ENCODE measurements at regions of chr11 and their contacts with region 1.

Region 1: GRCh38 chr11:77994412-77995362 is at the start of gene INTS4:
- DNase-seq: peak; percentile 99
- H3K4me3 Mint-ChIP-seq: peak within 1 kb of the TSS; percentile 83
- H3K27ac Mint-ChIP-seq: peak within 1 kb of the TSS; percentile 91
- H3K4me1 Mint-ChIP-seq: peaks cover 17% of the 10 kb centered on the region
- H3K27me3 Mint-ChIP-seq: no peaks in the 10 kb centered on the region
- total RNA-seq, gene INTS4: 45.5 to 46.0 TPM

Region 2: DNA sequence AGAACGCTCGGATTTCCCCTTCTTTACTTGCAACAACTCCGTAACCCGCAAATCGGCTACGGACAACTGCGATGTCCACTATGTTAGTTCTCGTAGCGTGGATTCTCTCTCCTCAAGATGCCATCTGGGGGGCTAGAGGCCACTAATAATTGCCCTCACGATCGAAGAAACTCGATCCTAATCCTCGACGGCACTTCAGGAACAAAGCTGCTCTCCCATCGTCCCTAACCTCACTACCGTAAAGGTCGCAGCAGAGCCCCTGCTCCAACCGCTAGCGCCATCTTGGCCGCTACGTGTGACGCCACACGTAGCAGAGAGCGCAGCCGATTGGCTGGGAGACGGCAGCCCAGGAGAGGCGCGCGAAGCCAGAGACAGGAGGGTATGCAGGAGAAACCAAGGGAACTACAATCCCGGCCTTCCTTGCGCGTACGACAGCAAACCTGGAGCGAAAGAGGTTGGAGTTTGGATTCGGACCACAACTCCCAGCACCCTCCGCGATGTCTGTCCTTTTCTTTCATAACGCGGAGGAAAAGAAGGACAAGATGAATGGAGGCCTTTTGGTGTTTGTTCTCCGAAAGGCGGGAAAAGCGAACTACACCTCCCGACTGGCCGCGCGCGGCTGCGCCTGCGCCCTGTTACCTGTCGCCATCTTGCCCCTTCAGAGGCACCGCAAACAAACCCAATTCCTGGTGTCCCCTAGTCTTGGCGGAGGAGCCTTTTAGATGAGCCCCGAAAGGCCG is 1550.1 kb before region 1 on chr11 and contains the start of gene EMSY:
- CTCF ChIA-PET with region 1: no interaction called
- intact Hi-C with region 1: loop called (anchors 10 kb)
- DNase-seq: peak; percentile 95
- H3K4me3 Mint-ChIP-seq: peak within 1 kb of the TSS; percentile 95
- H3K27ac Mint-ChIP-seq: peak within 1 kb of the TSS; percentile 96
- H3K4me1 Mint-ChIP-seq: peaks cover 32% of the 10 kb centered on the region
- H3K27me3 Mint-ChIP-seq: no peaks in the 10 kb centered on the region
- total RNA-seq, gene EMSY: 23.2 to 26.7 TPM

Region 3: GRCh38 chr11:77637345-77638165 is 357.1 kb before region 1 on chr11 and contains the start of gene CLNS1A:
- CTCF ChIA-PET with region 1: no interaction called
- intact Hi-C with region 1: loop called (anchors 1 kb)
- DNase-seq: peak; percentile 90
- H3K4me3 Mint-ChIP-seq: peak within 1 kb of the TSS; percentile 89
- H3K27ac Mint-ChIP-seq: peak within 1 kb of the TSS; percentile 92
- H3K4me1 Mint-ChIP-seq: peaks cover 35% of the 10 kb centered on the region
- H3K27me3 Mint-ChIP-seq: no peaks in the 10 kb centered on the region
- total RNA-seq, gene CLNS1A: 190 to 191 TPM

Region 4: GRCh38 chr11:78045851-78046485 is 51.3 kb after region 1 on chr11:
- CTCF ChIA-PET with region 1: interaction called, 11 read pairs
- intact Hi-C with region 1: loop called (anchors 2 kb)
- DNase-seq: peak; percentile 78
- H3K4me3 Mint-ChIP-seq: peak overlapping the region; percentile 39
- H3K27ac Mint-ChIP-seq: no peak overlapping the region
- H3K4me1 Mint-ChIP-seq: peaks cover 9% of the 10 kb centered on the region
- H3K27me3 Mint-ChIP-seq: no peaks in the 10 kb centered on the region

Region 5: GRCh38 chr11:78139422-78140391 is 145.0 kb after region 1 on chr11 and contains the start of gene ALG8:
- CTCF ChIA-PET with region 1: no interaction called
- intact Hi-C with region 1: loop called (anchors 1 kb)
- DNase-seq: peak; percentile 97
- H3K4me3 Mint-ChIP-seq: peak within 1 kb of the TSS; percentile 85
- H3K27ac Mint-ChIP-seq: peak within 1 kb of the TSS; percentile 90
- H3K4me1 Mint-ChIP-seq: peaks cover 33% of the 10 kb centered on the region
- H3K27me3 Mint-ChIP-seq: no peaks in the 10 kb centered on the region
- total RNA-seq, gene ALG8: 35.1 to 35.9 TPM

Region 6: GRCh38 chr11:78202733-78203167 is 208.1 kb after region 1 on chr11:
- CTCF ChIA-PET with region 1: no interaction called
- intact Hi-C with region 1: loop called (anchors 2 kb)
- DNase-seq: peak; percentile 73
- H3K4me3 Mint-ChIP-seq: peak overlapping the region; percentile 59
- H3K27ac Mint-ChIP-seq: peak overlapping the region; percentile 95
- H3K4me1 Mint-ChIP-seq: peaks cover 43% of the 10 kb centered on the region
- H3K27me3 Mint-ChIP-seq: no peaks in the 10 kb centered on the region

Region 7: DNA sequence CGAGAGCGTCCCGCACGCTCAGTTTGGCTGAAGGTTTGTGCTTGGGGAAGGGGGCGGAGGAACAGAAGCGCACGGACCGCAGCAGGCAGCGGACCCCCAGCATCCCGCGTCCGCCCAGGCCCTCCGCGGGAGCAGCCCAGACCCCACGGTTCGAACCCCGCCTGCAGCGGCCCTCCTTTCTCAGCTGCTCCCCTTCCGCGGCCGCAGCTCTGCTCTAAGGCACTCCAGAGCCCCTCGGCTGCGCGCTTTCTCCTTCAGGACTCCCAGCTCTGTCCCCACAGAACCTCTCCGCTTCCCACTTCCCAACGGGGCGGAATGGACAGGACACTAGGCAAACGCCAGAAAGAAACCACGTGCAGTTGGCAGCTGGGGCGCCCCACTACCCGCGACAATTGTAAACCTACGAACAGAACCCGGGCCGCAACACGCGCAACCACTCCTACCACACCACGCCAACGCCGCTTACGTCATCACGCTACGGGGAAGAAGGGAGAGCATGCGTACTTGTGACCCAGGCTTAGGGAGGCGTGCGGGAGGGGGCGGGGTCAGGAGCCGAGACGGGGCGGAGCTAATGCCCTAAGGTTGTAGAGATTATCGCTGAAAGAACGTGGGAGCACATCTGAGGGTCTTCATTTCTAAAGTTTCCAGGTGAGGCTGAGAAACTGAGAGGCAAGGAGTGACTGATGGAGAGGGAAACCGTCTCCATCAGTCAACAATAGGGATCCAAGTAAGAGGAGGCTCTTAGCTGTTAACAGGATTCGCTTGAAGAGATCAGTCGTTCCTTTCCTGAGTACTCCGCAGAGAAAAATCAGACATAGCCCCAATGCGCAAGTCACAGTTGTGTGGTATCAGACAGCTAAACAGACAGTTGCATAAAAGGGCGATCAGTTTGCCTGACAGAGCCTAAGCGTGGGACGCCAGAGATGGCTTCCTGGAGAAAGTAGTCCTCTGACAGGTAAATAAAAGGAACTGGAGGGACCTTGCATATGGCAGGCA is 580.0 kb after region 1 on chr11 and contains the start of gene NARS2:
- CTCF ChIA-PET with region 1: no interaction called
- intact Hi-C with region 1: loop called (anchors 1 kb)
- DNase-seq: peak; percentile 99
- H3K4me3 Mint-ChIP-seq: peak within 1 kb of the TSS; percentile 92
- H3K27ac Mint-ChIP-seq: peak within 1 kb of the TSS; percentile 84
- H3K4me1 Mint-ChIP-seq: peaks cover 23% of the 10 kb centered on the region
- H3K27me3 Mint-ChIP-seq: no peaks in the 10 kb centered on the region
- total RNA-seq, gene NARS2: 27.7 to 28.3 TPM

Measured in activated naive CD4-positive, alpha-beta T cell treated with anti-CD3 and anti-CD28 coated beads for 36 hours (primary cell).